ENCODE measurements at regions of chr15 and their contacts with region 1.

Region 1: DNA sequence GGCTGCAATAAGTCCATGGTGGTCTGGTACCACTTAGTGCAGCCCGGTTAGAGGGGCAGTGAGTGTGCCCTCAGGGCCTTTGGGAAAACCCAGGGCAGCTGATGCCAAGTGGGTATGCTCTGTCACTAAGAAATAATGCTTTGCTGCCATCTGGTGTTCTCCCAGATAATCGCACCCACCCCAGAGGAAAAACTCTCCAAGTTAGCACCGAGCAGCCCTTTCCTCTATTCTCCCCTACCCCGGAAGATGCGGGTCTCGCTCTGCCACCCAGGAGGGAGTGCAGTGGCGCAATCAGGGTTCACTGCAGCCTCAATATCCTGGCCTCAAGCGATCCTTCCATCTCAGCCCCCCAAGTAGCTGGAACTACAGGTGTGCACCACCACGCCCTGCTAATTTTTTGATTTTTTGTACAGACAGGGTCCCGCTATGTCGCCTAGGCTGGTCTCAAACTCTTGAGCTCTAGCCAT is 21.3 kb upstream of the DAPK2 start:
- DNase-seq: peak; percentile 86
- H3K4me3 ChIP-seq: no peak overlapping the region
- H3K27ac ChIP-seq: no peak overlapping the region
- H3K4me1 ChIP-seq: no peaks in the 10 kb centered on the region
- H3K27me3 ChIP-seq: no peaks in the 10 kb centered on the region
- CTCF ChIP-seq: peak; percentile 76

Region 2: DNA sequence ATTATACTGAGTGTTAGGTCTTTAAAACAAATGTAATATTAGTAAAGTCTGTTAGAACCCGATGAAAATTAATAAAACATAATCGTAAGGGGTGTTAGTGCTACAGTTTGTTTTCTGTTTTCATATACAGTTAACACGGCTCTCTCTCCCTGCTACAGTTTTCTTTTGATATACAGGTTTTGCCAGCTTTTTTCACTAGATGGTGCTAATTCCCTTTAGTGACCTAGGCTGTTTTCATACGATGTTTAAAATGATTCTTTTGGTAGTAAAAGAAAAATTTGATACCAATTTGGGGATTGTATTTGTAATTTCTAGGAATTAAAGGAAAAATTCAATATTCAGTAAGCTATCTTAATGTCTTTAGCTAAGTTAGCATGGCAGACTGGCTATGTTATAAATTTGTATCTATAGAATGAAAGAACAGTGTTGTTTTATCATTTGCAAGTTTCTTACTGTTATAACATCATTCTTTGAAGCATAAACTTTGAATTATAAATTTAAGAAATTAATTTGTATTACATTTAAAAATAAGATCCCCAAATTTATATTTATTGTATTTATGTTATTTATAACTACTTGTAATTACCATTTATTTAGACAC is 778.7 kb before region 1 on chr15:
- CTCF ChIA-PET with region 1: no interaction called
- POLR2A ChIA-PET with region 1: no interaction called
- intact Hi-C with region 1: loop called (anchors 2 kb)
- DNase-seq: peak; percentile 73
- H3K4me3 ChIP-seq: no peak overlapping the region
- H3K27ac ChIP-seq: no peak overlapping the region
- H3K4me1 ChIP-seq: peaks cover 19% of the 10 kb centered on the region
- H3K27me3 ChIP-seq: no peaks in the 10 kb centered on the region
- CTCF ChIP-seq: peak; percentile 85

Region 3: GRCh38 chr15:63466378-63467192 is 601.0 kb before region 1 on chr15:
- CTCF ChIA-PET with region 1: interaction called, 8 read pairs
- POLR2A ChIA-PET with region 1: no interaction called
- intact Hi-C with region 1: loop called (anchors 1 kb)
- DNase-seq: peak; percentile 73
- H3K4me3 ChIP-seq: no peak overlapping the region
- H3K27ac ChIP-seq: no peak overlapping the region
- H3K4me1 ChIP-seq: peaks cover 8% of the 10 kb centered on the region
- H3K27me3 ChIP-seq: no peaks in the 10 kb centered on the region
- CTCF ChIP-seq: peak; percentile 78

Region 4: DNA sequence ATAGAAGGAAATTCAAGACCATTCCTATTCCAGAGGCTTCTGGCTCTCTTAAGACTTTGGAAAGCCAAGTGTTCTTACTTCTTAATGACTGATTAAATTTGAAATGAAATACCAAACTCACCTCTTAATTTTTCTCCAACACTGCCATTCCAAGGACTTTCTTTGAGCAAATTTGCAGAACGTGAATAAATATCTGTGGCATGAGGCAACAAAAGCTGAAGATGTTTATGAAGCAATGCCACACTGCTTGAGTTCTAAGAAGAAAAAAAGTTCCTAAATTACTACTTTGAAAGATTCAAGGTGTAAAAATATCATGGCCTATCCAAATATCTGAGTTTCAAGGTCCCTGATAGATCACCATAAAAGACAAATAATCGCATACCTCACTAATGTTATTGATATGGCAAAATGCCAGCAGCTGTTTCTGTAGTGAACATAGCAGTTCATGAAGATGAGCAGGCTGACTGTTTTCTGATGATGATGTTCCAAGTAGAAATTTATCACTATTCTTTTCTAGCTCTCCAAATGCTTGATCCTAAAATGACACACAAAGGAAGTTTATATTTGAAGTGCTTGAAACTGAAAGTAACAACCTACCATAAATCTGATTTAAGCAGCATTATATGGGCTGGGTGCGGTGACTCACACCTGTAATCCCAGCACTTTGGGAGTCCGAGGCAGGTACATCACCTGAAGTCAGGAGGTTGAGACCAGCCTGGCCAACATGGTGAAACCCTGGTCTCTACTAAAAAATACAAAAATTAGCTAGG is 338.3 kb before region 1 on chr15:
- CTCF ChIA-PET with region 1: no interaction called
- POLR2A ChIA-PET with region 1: no interaction called
- intact Hi-C with region 1: loop called (anchors 2 kb)
- DNase-seq: no peak
- H3K4me3 ChIP-seq: no peak overlapping the region
- H3K27ac ChIP-seq: no peak overlapping the region
- H3K4me1 ChIP-seq: peaks cover 19% of the 10 kb centered on the region
- H3K27me3 ChIP-seq: no peaks in the 10 kb centered on the region
- CTCF ChIP-seq: no peak

Region 5: GRCh38 chr15:63891079-63891767 is 176.4 kb before region 1 on chr15:
- CTCF ChIA-PET with region 1: interaction called, 4 read pairs
- POLR2A ChIA-PET with region 1: no interaction called
- intact Hi-C with region 1: loop called (anchors 10 kb)
- DNase-seq: peak; percentile 87
- H3K4me3 ChIP-seq: no peak overlapping the region
- H3K27ac ChIP-seq: no peak overlapping the region
- H3K4me1 ChIP-seq: no peaks in the 10 kb centered on the region
- H3K27me3 ChIP-seq: no peaks in the 10 kb centered on the region
- CTCF ChIP-seq: peak; percentile 96

Region 6: GRCh38 chr15:64052925-64053491 is 14.6 kb before region 1 on chr15:
- CTCF ChIA-PET with region 1: no interaction called
- POLR2A ChIA-PET with region 1: no interaction called
- intact Hi-C with region 1: no loop called
- DNase-seq: no peak
- H3K4me3 ChIP-seq: no peak overlapping the region
- H3K27ac ChIP-seq: no peak overlapping the region
- H3K4me1 ChIP-seq: peaks cover 6% of the 10 kb centered on the region
- H3K27me3 ChIP-seq: no peaks in the 10 kb centered on the region
- CTCF ChIP-seq: no peak

Region 7: GRCh38 chr15:64476550-64476949 is 409.0 kb after region 1 on chr15:
- CTCF ChIA-PET with region 1: no interaction called
- POLR2A ChIA-PET with region 1: no interaction called
- intact Hi-C with region 1: no loop called
- DNase-seq: no peak
- H3K4me3 ChIP-seq: no peak overlapping the region
- H3K27ac ChIP-seq: peak overlapping the region; percentile 42
- H3K4me1 ChIP-seq: no peaks in the 10 kb centered on the region
- H3K27me3 ChIP-seq: no peaks in the 10 kb centered on the region
- CTCF ChIP-seq: no peak